Activated naive CD4-positive, alpha-beta T cell treated with anti-CD3 and anti-CD28 coated beads, Interleukin-2, amount 10 ng/mL, durations not matched to agents 7 days and 5 days (primary cell): ENCODE measurements at regions of chr17 and their contacts with region 1.

Region 1: DNA sequence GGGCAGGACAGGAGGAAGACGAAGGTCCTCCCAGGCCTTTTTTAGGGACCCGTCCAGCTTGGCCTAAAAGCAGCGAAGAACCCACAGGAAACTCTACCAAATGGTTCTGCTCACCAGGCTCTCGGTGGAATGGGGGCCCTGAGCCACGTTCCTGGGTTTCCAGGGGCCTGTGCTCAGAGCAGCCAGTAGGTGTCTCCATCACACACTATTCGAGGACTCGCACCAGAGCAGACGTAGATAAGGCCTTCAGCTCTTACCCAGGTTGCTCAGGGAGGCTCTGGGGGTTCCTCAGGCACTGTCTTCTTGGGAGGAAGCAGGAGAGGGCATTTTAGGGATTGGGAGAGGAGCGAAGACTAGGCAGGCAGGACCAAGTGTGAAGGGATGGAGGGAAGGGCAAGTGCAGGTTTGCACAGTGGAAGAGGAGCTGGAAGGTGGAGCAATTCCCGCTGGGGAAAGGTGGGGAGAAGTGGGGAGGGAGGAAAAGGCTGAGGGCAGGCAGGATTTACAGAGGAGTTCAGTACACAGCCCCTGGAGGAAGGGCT is 157.1 kb downstream of the RGS9 start:
- DNase-seq: peak; percentile 71
- H3K4me3 Mint-ChIP-seq: no peak overlapping the region
- H3K27ac Mint-ChIP-seq: no peak overlapping the region
- H3K4me1 Mint-ChIP-seq: no peaks in the 10 kb centered on the region
- H3K27me3 Mint-ChIP-seq: peaks cover 23% of the 10 kb centered on the region

Region 2: GRCh38 chr17:65231662-65232335 is 62.5 kb before region 1 on chr17:
- CTCF ChIA-PET with region 1: interaction called, 26 read pairs
- DNase-seq: peak; percentile 65
- H3K4me3 Mint-ChIP-seq: no peak overlapping the region
- H3K27ac Mint-ChIP-seq: no peak overlapping the region
- H3K4me1 Mint-ChIP-seq: peaks cover 33% of the 10 kb centered on the region
- H3K27me3 Mint-ChIP-seq: peaks cover 34% of the 10 kb centered on the region

Region 3: GRCh38 chr17:65278050-65278819 is 16.0 kb before region 1 on chr17:
- CTCF ChIA-PET with region 1: interaction called, 11 read pairs
- DNase-seq: peak; percentile 38
- H3K4me3 Mint-ChIP-seq: no peak overlapping the region
- H3K27ac Mint-ChIP-seq: no peak overlapping the region
- H3K4me1 Mint-ChIP-seq: peaks cover 14% of the 10 kb centered on the region
- H3K27me3 Mint-ChIP-seq: peaks cover 25% of the 10 kb centered on the region

Region 4: GRCh38 chr17:65556014-65556909 is 262.0 kb after region 1 on chr17:
- CTCF ChIA-PET with region 1: interaction called, 40 read pairs
- DNase-seq: peak; percentile 95
- H3K4me3 Mint-ChIP-seq: no peak overlapping the region
- H3K27ac Mint-ChIP-seq: no peak overlapping the region
- H3K4me1 Mint-ChIP-seq: peaks cover 28% of the 10 kb centered on the region
- H3K27me3 Mint-ChIP-seq: no peaks in the 10 kb centered on the region

Region 5: DNA sequence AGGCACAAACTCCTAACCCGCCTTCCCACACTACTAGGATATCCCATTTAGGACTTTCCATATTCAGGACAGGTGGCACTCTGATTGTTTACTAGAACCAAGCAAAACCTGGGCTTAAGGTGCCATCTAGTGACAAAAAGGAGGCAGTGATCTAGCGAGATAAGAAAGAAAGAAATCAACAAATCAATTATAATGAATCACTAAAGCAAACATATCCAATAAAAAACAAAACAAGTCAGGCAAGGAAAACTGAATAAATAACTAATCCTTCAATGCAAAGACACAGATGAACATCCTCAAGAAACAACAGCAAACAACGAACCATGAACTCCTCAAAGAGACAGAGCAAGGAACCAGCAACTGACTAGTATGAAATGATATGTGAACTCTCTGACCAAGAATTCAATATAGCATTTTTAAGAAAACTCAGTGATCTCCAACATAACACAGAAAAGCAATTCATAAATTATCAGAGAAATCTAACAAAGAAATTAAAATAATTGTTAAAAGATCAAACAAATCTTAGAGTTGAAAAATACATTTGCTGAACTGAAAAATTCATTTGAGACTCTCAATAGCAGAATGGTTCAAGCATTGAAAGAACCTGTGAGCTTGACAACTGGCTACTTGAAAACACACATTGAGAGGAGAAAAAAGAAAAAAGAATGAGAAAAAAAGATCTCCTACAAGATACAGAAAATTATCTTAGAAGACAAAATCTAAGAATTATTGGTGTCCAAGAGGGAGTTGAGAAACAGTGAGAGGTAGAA is 694.0 kb after region 1 on chr17:
- CTCF ChIA-PET with region 1: interaction called, 13 read pairs
- DNase-seq: no peak
- H3K4me3 Mint-ChIP-seq: no peak overlapping the region
- H3K27ac Mint-ChIP-seq: no peak overlapping the region
- H3K4me1 Mint-ChIP-seq: no peaks in the 10 kb centered on the region
- H3K27me3 Mint-ChIP-seq: peaks cover 6% of the 10 kb centered on the region

Region 6: GRCh38 chr17:66165513-66166123 is 871.4 kb after region 1 on chr17:
- CTCF ChIA-PET with region 1: interaction called, 13 read pairs
- DNase-seq: no peak
- H3K4me3 Mint-ChIP-seq: no peak overlapping the region
- H3K27ac Mint-ChIP-seq: no peak overlapping the region
- H3K4me1 Mint-ChIP-seq: peaks cover 2% of the 10 kb centered on the region
- H3K27me3 Mint-ChIP-seq: no peaks in the 10 kb centered on the region